GM12878 (cell line): ENCODE measurements at regions of chr6 and their contacts with region 1.

Region 1: GRCh38 chr6:16286148-16286522 is 47.7 kb downstream of the GMPR start:
- DNase-seq: no peak
- ATAC-seq: peak; percentile 82
- H3K4me3 ChIP-seq: no peak overlapping the region
- H3K27ac ChIP-seq: no peak overlapping the region
- H3K4me1 ChIP-seq: no peaks in the 10 kb centered on the region
- H3K27me3 ChIP-seq: no peaks in the 10 kb centered on the region
- CTCF ChIP-seq: peak; percentile 79 to 95 (median 84)
- EP300 ChIP-seq: no peak
- POLR2A ChIP-seq: no peak
- RAD21 ChIP-seq: peak; percentile 90

Region 2: DNA sequence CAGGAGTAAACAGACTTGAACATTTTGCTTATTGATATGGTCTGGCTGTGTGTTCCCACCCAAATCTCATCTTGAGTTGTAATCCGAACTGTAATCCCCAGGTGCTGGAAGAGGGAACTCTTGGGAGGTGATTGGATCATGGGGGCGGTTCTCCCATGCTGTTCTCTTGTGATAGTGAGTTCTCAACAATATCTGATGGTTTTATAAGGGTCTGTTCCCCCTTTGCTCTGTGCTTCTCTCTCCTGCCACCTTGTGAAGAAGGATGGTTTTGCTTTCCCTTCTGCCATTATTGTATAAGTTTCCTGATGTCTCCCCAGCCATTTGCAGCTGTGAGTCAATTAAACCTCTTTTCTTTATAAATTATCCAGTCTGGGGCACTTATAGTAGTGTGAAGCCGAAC is 117.3 kb before region 1 on chr6:
- CTCF ChIA-PET with region 1: no interaction called
- POLR2A ChIA-PET with region 1: no interaction called
- RAD21 ChIA-PET with region 1: no interaction called
- SMC1A ChIA-PET with region 1: no interaction called
- in situ Hi-C with region 1: no loop called
- intact Hi-C with region 1: no loop called
- DNase-seq: peak; percentile 32
- ATAC-seq: peak; percentile 86
- H3K4me3 ChIP-seq: no peak overlapping the region
- H3K27ac ChIP-seq: no peak overlapping the region
- H3K4me1 ChIP-seq: peaks cover 13% of the 10 kb centered on the region
- H3K27me3 ChIP-seq: no peaks in the 10 kb centered on the region
- CTCF ChIP-seq: peak; percentile 56 to 66 (median 65)
- EP300 ChIP-seq: no peak
- POLR2A ChIP-seq: no peak
- RAD21 ChIP-seq: peak; percentile 87

Region 3: DNA sequence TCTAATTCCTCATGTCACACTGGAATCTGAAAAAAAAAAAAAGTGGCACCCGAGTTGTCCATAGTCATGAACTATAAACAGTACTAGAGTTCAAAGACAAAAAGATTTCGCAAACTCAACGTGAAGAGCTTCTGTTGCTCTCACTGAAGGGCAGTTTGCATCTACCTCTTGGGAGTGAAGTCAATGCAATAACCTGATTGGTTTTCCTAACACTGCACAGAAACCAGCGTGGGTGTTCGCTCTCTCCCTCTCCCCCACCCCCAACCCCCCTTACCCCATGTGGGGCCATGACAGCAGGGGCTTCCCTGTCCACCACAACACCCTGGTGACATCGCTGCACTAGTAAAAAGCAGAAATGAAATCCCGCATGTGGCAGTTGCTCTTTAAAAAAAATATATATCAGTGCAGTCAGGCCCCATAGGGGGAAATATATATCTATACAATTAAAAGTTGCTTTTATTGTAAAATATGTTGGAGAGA is 19.2 kb after region 1 on chr6:
- CTCF ChIA-PET with region 1: interaction called, 71 read pairs
- POLR2A ChIA-PET with region 1: interaction called, 3 read pairs
- RAD21 ChIA-PET with region 1: interaction called, 10 read pairs
- SMC1A ChIA-PET with region 1: interaction called, 8 read pairs
- in situ Hi-C with region 1: no loop called
- intact Hi-C with region 1: no loop called
- DNase-seq: peak; percentile 83
- ATAC-seq: peak; percentile 90
- H3K4me3 ChIP-seq: peak overlapping the region; percentile 53; the same call in 1 of the 2 replicates
- H3K27ac ChIP-seq: peak overlapping the region; percentile 75
- H3K4me1 ChIP-seq: peaks cover 32% of the 10 kb centered on the region
- H3K27me3 ChIP-seq: no peaks in the 10 kb centered on the region
- CTCF ChIP-seq: no peak
- EP300 ChIP-seq: peak; percentile 83 to 88
- POLR2A ChIP-seq: no peak
- RAD21 ChIP-seq: no peak

Region 4: DNA sequence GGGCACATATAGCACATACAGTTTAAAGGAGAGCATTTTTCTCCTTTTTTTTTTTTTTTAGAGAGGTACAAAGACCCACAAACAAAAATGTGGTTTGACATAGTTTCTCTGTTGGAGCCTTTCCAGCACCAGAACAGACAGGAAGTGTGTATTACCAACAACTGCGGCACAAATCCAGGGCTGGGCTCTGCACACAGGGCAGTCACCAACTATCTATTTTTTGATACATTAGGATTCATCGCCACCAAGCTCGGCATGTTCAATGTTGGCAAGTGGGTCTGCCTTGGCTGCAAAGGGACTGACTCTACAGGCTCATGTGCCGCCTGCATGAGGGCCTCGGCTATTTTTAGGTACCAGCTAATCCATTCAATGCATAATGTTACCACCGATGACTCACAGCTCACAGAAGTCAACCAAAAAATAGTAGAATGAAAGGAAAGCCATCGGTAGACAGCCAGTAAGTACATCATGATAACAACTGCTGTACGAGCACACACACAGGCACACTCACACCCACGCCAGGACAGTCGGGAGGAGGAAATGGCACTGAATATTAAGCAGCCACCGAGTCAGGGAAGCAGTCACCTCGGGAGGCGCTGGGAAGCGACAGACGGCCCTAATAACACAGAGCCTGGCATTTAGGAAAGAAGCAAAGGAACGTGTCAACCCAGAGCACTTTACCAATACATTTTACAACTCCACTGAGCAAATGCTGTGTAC is 33.8 kb after region 1 on chr6:
- CTCF ChIA-PET with region 1: interaction called, 14 read pairs
- POLR2A ChIA-PET with region 1: no interaction called
- RAD21 ChIA-PET with region 1: interaction called, 7 read pairs
- SMC1A ChIA-PET with region 1: interaction called, 13 read pairs
- in situ Hi-C with region 1: no loop called
- intact Hi-C with region 1: no loop called
- DNase-seq: peak; percentile 59
- ATAC-seq: peak; percentile 90
- H3K4me3 ChIP-seq: peak overlapping the region; percentile 43
- H3K27ac ChIP-seq: peak overlapping the region; percentile 56
- H3K4me1 ChIP-seq: peaks cover 31% of the 10 kb centered on the region
- H3K27me3 ChIP-seq: no peaks in the 10 kb centered on the region
- CTCF ChIP-seq: no peak
- EP300 ChIP-seq: 0 out of 4 replicates have a peak, but pooled peaks of 1 of the 2 experiments have one; percentile 9
- POLR2A ChIP-seq: 0 out of 2 replicates have a peak, but pooled peaks have one; percentile 26
- RAD21 ChIP-seq: no peak

Region 5: DNA sequence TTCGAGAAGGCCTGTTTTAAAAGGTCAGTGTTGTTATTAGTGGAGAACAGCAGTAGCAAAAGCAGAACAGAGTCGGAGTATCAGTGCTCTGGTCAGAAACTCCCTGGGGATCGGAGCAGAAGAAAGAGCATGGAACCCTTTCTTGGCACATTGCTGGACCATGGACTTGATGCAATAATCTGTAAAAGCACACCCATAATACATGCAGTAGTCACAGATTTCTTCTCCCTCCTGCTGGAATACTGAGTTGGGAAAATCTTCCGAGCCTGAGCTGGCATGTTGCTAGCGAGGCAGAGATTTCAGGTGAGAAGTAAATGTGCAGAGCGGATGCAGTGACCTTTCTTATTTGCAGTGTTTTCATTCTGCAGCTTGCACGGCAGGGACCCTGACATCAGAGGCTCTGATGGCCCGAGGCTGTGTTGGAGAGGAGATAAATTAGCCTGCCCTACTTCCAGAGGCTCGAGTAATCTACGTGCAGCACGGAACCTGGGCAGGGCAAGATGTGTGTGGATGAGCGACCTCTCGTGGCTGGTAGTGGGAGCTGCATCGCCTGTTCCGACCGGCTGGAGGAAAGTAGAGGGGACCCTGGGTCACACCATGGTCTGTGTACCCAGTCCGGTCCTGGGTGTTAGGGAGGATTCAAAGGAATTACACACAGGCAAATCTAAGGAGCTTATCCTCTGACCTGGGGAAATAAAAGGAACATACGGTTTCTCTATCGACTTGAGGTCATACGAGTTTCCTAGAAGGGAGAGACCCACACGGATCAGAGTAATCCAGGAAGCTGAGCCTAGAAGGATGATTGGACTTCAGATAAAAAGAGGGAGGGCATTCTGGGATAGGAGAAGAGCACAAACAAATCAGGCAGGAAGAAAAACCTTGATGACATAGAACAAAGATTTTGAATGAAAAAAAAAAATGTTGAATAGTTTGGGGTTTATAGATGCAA is 678.7 kb after region 1 on chr6:
- CTCF ChIA-PET with region 1: interaction called, 10 read pairs
- POLR2A ChIA-PET with region 1: no interaction called
- RAD21 ChIA-PET with region 1: interaction called, 6 read pairs
- SMC1A ChIA-PET with region 1: interaction called, 5 read pairs
- in situ Hi-C with region 1: no loop called
- intact Hi-C with region 1: loop called (anchors 10 kb)
- DNase-seq: peak; percentile 12
- ATAC-seq: peak; percentile 99
- H3K4me3 ChIP-seq: no peak overlapping the region
- H3K27ac ChIP-seq: no peak overlapping the region
- H3K4me1 ChIP-seq: no peaks in the 10 kb centered on the region
- H3K27me3 ChIP-seq: no peaks in the 10 kb centered on the region; a peak in 1 of 4 replicates
- CTCF ChIP-seq: peak; percentile 81 to 95 (median 92)
- EP300 ChIP-seq: no peak
- POLR2A ChIP-seq: no peak
- RAD21 ChIP-seq: peak; percentile 85